ENCODE measurements at regions of chr11 and their contacts with region 1.

Region 1: DNA sequence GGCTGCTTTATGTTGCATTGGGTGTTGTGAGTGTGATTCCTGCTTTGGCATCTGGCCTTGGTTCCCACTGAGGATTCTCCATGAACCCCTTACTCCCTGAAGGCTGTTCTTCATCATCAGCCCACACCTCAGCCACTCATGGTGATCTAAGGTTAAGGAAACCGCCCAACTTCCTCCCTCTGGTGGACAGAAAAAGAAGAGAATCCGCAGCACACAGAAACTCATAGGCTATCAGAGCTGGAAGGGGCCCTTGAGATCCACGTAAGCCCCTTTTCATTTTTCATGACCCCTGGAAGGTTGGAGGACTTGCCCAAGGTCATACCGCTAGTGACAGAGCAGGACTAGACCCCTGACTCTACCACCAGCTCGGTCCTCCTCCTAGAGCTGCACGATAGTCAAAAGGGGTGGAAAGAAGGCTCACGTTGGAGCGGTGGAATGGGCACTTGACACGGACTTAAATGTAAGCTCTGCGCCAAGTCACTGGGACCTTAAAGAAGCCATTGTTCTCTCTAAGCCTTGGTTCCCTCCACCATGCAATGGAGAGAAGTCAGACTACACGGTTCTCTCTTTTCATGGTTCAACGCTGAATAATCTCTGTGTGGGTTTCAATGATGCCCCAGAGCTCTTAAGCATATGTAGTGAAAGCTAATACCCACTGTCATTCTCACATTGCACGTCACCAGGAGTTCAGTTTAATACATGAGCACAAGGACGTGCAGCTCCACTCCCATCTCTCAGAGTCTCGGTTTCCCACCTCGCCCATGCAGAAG is 83.6 kb upstream of the CRTAM start:
- DNase-seq: peak; percentile 30
- ATAC-seq: peak; percentile 85
- H3K4me3 Mint-ChIP-seq: no peak overlapping the region
- H3K27ac Mint-ChIP-seq: no peak overlapping the region
- H3K4me1 Mint-ChIP-seq: 0 out of 2 replicates have a peak, but pooled peaks cover 6% of the 10 kb centered on the region
- H3K27me3 Mint-ChIP-seq: no peaks in the 10 kb centered on the region
- CTCF ChIP-seq: peak; percentile 38; the same call in 1 of the 2 replicates

Region 2: DNA sequence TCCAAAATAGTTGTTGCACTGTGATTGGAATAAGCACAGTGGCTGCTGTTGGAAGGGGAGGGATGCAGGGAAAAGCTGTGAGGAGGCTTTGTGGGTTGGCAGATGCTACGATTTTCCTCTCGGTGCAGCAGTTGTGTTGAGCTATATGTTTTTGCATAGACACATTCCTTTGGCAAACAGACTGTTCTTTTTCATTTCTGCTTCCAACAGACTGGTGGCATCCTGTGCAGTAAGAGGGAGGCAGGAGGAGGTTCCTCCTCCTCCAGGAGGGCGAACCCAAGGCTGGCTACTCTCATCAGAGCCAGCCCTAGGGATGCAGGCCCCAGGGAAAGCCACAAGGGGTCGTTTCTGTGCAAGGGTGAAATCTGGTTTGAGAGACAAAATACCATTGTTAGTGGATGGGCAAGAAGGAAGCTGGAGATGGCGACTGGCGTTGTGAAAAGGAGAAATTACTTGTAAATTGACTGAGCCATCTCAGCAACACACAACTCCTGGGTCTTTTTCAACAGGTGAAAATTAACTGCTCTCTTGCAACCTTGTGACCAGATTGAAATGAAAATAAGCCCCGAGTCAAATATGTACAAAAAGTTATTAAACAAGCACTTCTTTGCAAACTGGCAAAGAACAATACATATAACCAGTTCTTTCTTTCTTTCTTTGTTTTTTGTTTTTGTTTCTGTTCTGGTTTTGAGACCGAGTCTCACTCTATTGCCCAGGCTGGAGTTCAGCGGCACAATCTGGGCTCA is 125.8 kb before region 1 on chr11:
- CTCF ChIA-PET with region 1: interaction called, 51 read pairs
- POLR2A ChIA-PET with region 1: no interaction called
- DNase-seq: peak; percentile 81
- ATAC-seq: peak; percentile 98
- H3K4me3 Mint-ChIP-seq: no peak overlapping the region
- H3K27ac Mint-ChIP-seq: no peak overlapping the region
- H3K4me1 Mint-ChIP-seq: no peaks in the 10 kb centered on the region; the same call in 1 of the 2 replicates
- H3K27me3 Mint-ChIP-seq: no peaks in the 10 kb centered on the region; the same call in 1 of the 2 replicates
- CTCF ChIP-seq: peak; percentile 63; the same call in 1 of the 2 replicates

Region 3: GRCh38 chr11:122663764-122664163 is 91.0 kb before region 1 on chr11:
- CTCF ChIA-PET with region 1: interaction called, 56 read pairs
- POLR2A ChIA-PET with region 1: no interaction called
- DNase-seq: no peak
- ATAC-seq: no peak
- H3K4me3 Mint-ChIP-seq: no peak overlapping the region
- H3K27ac Mint-ChIP-seq: no peak overlapping the region
- H3K4me1 Mint-ChIP-seq: peaks cover 15% of the 10 kb centered on the region
- H3K27me3 Mint-ChIP-seq: no peaks in the 10 kb centered on the region; the same call in 1 of the 2 replicates
- CTCF ChIP-seq: no peak

Region 4: DNA sequence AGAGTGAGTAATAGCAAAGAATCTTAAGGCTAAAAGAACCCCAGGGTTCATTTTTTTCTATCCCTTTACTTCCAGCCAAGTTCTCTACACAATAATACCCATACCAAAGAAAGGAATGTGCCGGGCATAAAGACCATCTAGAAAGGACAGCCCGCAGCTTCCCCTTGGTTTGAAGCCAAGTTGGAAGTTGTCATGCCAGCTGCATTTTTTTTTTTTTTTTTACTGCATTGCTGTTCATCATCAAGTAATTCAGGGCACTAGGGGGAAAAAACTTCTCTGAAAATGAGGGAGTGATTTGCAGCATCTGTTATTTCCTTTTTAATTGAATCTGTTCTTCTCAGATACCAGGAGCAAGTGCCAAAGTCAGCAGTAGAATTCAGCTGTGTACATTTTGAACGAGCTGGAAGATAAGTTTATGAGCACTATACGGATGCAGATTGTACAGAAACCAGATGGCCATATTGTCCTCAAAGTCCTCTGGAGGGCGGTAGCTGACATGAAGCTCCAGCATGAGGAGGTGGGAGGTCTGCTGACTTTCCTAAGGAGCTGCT is 42.8 kb before region 1 on chr11:
- CTCF ChIA-PET with region 1: interaction called, 17 read pairs
- POLR2A ChIA-PET with region 1: no interaction called
- DNase-seq: no peak
- ATAC-seq: 0 out of 2 replicates have a peak, but pooled peaks have one; percentile 30
- H3K4me3 Mint-ChIP-seq: no peak overlapping the region
- H3K27ac Mint-ChIP-seq: no peak overlapping the region
- H3K4me1 Mint-ChIP-seq: peaks cover 6% of the 10 kb centered on the region
- H3K27me3 Mint-ChIP-seq: no peaks in the 10 kb centered on the region
- CTCF ChIP-seq: no peak

Region 5: GRCh38 chr11:122781378-122782195 is 26.8 kb after region 1 on chr11:
- CTCF ChIA-PET with region 1: interaction called, 31 read pairs
- POLR2A ChIA-PET with region 1: no interaction called
- DNase-seq: peak; percentile 92
- ATAC-seq: peak; percentile 95
- H3K4me3 Mint-ChIP-seq: no peak overlapping the region
- H3K27ac Mint-ChIP-seq: no peak overlapping the region
- H3K4me1 Mint-ChIP-seq: peaks cover 18% of the 10 kb centered on the region
- H3K27me3 Mint-ChIP-seq: no peaks in the 10 kb centered on the region
- CTCF ChIP-seq: peak; percentile 85

Measured in WTC11 (cell line).